Activated CD8-positive, alpha-beta T cell treated with anti-CD3 and anti-CD28 coated beads, Interleukin-2, amount 10 ng/mL, durations not matched to agents 7 days and 5 days (primary cell): ENCODE measurements at regions of chr14 and their contacts with region 1.

Region 1: GRCh38 chr14:65824285-65824977 is 411.9 kb downstream of the FUT8 start:
- DNase-seq: peak; percentile 78
- ATAC-seq: peak; percentile 93
- H3K4me3 Mint-ChIP-seq: no peak overlapping the region
- H3K27ac Mint-ChIP-seq: peak overlapping the region; percentile 75
- H3K4me1 Mint-ChIP-seq: peaks cover 29% of the 10 kb centered on the region
- H3K27me3 Mint-ChIP-seq: no peaks in the 10 kb centered on the region

Region 2: GRCh38 chr14:65170768-65171507 is 653.5 kb before region 1 on chr14:
- CTCF ChIA-PET with region 1: interaction called, 42 read pairs
- POLR2A ChIA-PET with region 1: no interaction called
- DNase-seq: peak; percentile 62
- ATAC-seq: peak; percentile 84
- H3K4me3 Mint-ChIP-seq: peak overlapping the region; percentile 63
- H3K27ac Mint-ChIP-seq: peak overlapping the region; percentile 50
- H3K4me1 Mint-ChIP-seq: peaks cover 32% of the 10 kb centered on the region
- H3K27me3 Mint-ChIP-seq: peaks cover 7% of the 10 kb centered on the region

Region 3: DNA sequence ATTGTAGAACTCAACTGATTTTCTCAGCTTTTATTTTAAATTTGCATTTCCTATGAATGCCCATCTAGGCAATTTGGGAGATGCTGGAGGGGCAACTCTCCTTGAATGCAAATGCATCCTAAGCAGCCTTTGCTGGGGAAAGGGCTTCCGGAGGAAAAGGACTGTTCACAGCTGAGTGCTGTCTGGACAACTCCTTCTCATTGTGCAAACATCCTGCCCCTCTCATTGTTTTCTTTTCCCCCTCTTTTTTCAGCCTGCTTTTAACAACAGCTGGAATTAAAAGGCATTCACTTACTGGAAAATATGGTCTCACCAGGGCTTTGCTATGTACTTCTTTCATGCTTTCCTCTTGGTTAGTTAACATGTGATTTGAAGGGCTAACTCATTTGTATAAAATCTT is 14.1 kb before region 1 on chr14:
- CTCF ChIA-PET with region 1: interaction called, 15 read pairs
- POLR2A ChIA-PET with region 1: no interaction called
- DNase-seq: no peak
- ATAC-seq: no peak
- H3K4me3 Mint-ChIP-seq: no peak overlapping the region
- H3K27ac Mint-ChIP-seq: no peak overlapping the region
- H3K4me1 Mint-ChIP-seq: no peaks in the 10 kb centered on the region
- H3K27me3 Mint-ChIP-seq: peaks cover 10% of the 10 kb centered on the region

Region 4: GRCh38 chr14:65860956-65861611 is 36.7 kb after region 1 on chr14:
- CTCF ChIA-PET with region 1: interaction called, 19 read pairs
- POLR2A ChIA-PET with region 1: no interaction called
- DNase-seq: peak; percentile 84
- ATAC-seq: peak; percentile 89
- H3K4me3 Mint-ChIP-seq: peak overlapping the region; percentile 59
- H3K27ac Mint-ChIP-seq: peak overlapping the region; percentile 88
- H3K4me1 Mint-ChIP-seq: peaks cover 69% of the 10 kb centered on the region
- H3K27me3 Mint-ChIP-seq: no peaks in the 10 kb centered on the region

Region 5: DNA sequence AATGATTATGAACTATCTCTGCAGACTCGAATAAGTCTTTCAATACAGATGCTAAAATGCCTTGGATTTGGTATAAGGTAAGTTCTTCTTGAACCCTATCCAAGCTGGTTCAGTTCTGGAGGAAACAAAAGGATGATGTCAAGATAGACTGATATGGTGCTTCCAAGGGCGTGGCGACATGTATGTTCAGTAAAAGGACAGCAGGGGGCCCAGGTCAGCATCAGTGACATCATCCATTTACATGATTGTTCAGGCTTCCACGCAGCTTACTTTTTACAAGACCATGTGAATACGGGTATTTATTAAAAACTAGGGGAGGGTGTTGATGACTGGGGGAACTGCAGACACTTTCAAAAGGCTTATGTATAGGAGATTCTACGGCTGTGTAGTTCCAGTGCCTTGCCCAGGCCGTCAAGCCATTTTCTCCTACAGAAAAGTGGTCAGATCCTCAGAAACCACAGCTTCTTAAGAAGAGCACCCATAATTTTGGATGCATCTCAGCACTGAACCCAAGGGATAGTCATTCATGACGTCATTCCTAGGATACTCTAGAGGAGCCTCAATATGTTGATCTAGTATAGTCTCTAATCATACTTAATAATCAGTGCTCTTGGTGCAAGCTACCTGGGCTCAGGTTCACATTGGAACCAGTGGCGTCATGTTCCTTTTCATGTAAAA is 115.8 kb after region 1 on chr14:
- CTCF ChIA-PET with region 1: interaction called, 19 read pairs
- POLR2A ChIA-PET with region 1: no interaction called
- DNase-seq: peak; percentile 50
- ATAC-seq: peak; percentile 49
- H3K4me3 Mint-ChIP-seq: no peak overlapping the region
- H3K27ac Mint-ChIP-seq: no peak overlapping the region
- H3K4me1 Mint-ChIP-seq: peaks cover 53% of the 10 kb centered on the region
- H3K27me3 Mint-ChIP-seq: no peaks in the 10 kb centered on the region